ENCODE measurements at regions of chr6 and their contacts with region 1.

Region 1: DNA sequence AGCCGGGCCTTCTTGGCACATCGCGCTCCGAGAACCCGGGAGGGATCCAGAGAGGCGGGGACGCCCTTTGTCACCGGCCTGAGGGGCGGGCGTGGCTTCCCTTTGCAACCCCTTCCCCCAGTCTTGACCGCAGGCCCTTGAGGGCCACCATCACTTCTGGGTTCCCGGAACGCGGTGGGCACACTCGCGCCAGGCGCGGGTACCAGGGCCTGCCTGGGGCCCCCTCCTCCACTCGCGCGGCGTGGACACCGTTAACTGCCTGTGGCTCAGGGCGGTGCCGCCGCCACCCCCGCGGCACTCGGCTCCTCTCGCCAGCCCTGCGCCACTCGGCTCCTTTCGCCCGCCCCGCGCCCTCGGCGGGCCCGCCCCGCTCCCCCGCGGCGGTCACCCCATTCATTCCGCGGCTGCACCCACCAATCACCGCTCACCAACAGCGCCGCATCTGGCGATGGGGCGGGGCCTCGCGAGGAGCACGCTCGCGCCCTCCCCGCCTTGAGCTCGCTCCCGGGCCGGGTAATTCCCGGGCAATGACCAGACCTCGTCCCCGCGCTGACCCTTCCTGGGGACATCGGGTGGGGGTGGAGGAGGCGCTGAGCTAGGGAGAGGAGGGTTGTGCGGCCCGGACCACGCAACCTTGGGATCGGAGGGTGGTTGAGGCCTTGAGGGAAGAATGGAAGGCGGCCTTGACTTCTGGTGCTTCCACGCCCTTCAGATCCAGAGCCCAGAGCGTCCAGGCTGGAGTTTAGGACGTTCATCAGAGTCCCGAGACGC is 10.5 kb upstream of the ELOVL5 start:
- H3K4me3 Mint-ChIP-seq: peak overlapping the region; percentile 95
- H3K27ac Mint-ChIP-seq: peak overlapping the region; percentile 94
- H3K4me1 Mint-ChIP-seq: peaks cover 35% of the 10 kb centered on the region
- H3K27me3 Mint-ChIP-seq: peaks cover 8% of the 10 kb centered on the region

Region 2: DNA sequence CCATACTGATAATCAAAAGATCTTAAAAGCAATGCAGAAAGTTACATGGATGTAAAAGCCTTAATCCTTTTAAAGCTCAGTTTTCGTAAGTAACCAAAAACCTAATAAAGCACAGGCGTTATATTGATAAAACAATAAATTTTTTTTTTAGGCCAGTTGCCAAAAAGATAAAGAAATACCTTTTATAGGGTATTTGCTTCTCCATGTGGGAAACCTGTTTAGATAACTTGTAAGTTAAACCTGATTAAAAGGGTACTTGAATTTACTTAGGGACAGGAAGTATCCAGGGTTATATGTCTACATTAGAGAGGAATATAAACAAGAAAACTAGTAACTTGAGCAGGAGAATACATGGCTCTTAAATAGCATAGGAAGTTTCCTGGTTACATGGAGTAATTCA is 273.0 kb before region 1 on chr6:
- intact Hi-C with region 1: no loop called
- H3K4me3 Mint-ChIP-seq: no peak overlapping the region
- H3K27ac Mint-ChIP-seq: no peak overlapping the region
- H3K4me1 Mint-ChIP-seq: no peaks in the 10 kb centered on the region
- H3K27me3 Mint-ChIP-seq: no peaks in the 10 kb centered on the region

Region 3: GRCh38 chr6:53348371-53349208 is 10.7 kb before region 1 on chr6 and contains the start of gene ELOVL5:
- intact Hi-C with region 1: loop called (anchors 1 kb)
- H3K4me3 Mint-ChIP-seq: peak within 1 kb of the TSS; percentile 92
- H3K27ac Mint-ChIP-seq: peak within 1 kb of the TSS; percentile 90
- H3K4me1 Mint-ChIP-seq: peaks cover 43% of the 10 kb centered on the region
- H3K27me3 Mint-ChIP-seq: peaks cover 3% of the 10 kb centered on the region

Region 4: DNA sequence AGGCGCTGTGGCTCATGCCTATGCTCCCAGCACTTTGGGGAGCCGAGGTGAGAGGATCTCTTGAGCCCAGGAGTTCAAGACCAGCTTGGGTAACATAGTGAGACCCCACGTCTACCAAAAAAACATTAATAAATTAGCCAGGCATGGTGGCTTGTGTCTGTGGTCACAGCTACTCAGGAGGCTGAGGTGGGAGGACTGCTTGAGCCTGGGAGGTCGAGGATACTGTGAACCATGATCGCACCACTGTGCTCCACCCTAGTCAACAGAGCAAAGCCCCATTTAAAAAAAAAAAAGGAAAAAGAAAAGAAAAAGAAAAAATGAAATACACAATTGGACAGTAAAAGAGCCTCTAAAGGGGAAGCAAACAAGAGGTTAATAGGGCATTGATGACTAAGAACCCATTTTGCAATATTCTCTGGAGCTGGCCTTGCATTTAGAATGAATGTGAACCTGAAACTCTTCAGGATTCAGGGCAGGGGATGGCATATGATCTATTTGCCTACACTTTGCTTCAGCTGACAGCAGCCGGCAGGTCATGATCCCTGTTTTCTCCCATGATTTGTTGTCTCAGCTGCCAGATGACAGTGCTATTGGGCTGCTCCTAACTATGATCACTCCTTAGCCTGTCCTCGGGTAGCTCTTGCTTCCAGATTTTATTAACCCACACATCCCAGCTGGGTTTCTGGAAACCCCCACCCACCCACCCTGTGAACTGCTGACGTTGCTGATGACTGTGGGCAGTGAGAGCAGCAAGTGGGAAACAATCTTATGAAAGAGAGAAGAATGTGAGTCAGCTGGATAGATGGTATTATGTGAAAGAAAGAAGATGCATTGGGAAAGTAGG is 73.3 kb after region 1 on chr6:
- intact Hi-C with region 1: loop called (anchors 2 kb)
- H3K4me3 Mint-ChIP-seq: peak overlapping the region; percentile 21
- H3K27ac Mint-ChIP-seq: peak overlapping the region; percentile 40
- H3K4me1 Mint-ChIP-seq: peaks cover 42% of the 10 kb centered on the region
- H3K27me3 Mint-ChIP-seq: no peaks in the 10 kb centered on the region

Measured in dendritic cell treated with granulocyte-macrophage colony-stimulating factor and Interleukin-4, amounts not matched to agents 40 ng/mL and 50 ng/mL, for 4 days (primary cell).